A549 (cell line): ENCODE measurements at regions of chr14 and their contacts with region 1.

Region 1: DNA sequence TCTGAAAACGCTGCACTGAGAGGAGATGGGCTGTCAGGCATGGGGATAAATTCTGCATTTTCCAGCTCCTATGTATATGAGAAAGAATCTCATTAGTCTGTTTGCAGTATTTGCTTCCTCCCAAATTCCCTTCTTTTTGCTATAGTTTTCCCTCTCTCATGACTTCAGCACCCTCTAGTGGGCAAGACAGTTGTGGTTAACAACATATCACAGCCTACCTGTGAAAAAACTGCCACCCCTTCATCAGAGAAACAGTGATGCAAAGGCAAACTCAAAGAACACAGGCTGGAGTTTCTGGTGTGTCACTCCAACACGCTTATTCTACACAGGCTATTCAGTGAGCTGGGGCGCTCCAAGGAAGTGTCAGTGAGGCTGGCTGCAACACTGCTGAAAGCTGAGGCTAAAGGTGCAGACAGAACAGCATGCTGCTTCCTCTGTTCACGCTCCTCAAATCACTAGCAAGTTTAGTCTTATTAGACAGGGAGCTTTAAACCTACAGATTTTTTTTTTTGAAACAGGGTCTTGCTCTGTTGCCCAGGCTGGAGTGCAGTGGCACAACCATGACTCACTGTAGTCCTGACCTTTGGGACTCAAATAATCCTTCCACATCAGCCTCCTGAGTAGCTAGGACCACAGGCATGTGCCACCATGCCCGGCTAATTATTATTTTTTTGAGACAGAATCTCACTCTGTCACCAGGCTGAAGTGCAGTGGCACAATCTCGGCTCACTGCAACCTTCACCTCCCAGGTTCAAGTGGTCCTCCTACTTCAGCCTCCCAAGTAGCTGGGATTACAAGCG is 19.3 kb downstream of the ZC2HC1C start:
- DNase-seq: peak; percentile 43 to 63
- ATAC-seq: peak; percentile 90 to 94
- H3K4me3 ChIP-seq: no peak overlapping the region
- H3K27ac ChIP-seq: no peak overlapping the region
- H3K4me1 ChIP-seq: no peaks in the 10 kb centered on the region
- CTCF ChIP-seq: peak; percentile 86
- EP300 ChIP-seq: no peak
- POLR2A ChIP-seq: no peak
- RAD21 ChIP-seq: peak; percentile 84 to 93

Region 2: GRCh38 chr14:74860906-74861733 is 227.7 kb before region 1 on chr14:
- CTCF ChIA-PET with region 1: interaction called, 148 read pairs
- POLR2A ChIA-PET with region 1: no interaction called
- DNase-seq: peak; percentile 74 to 82
- ATAC-seq: peak; percentile 81 to 92
- H3K4me3 ChIP-seq: no peak overlapping the region
- H3K27ac ChIP-seq: no peak overlapping the region
- H3K4me1 ChIP-seq: no peaks in the 10 kb centered on the region
- CTCF ChIP-seq: peak; percentile 87
- EP300 ChIP-seq: no peak
- POLR2A ChIP-seq: no peak
- RAD21 ChIP-seq: peak; percentile 82 to 91

Region 3: GRCh38 chr14:74905375-74906142 is 183.2 kb before region 1 on chr14:
- CTCF ChIA-PET with region 1: interaction called, 87 read pairs
- POLR2A ChIA-PET with region 1: no interaction called
- DNase-seq: peak; percentile 51 to 60
- ATAC-seq: peak; percentile 33 to 74; a peak in 3 of 6 replicates
- H3K4me3 ChIP-seq: no peak overlapping the region
- H3K27ac ChIP-seq: peak overlapping the region in 1 of 2 experiments; percentile 44; a peak in 1 of 6 replicates
- H3K4me1 ChIP-seq: no peaks in the 10 kb centered on the region; the same call in 2 of the 3 replicates
- CTCF ChIP-seq: peak; percentile 85
- EP300 ChIP-seq: no peak
- POLR2A ChIP-seq: no peak
- RAD21 ChIP-seq: peak; percentile 57 to 60; a peak in 4 of 5 replicates

Region 4: GRCh38 chr14:74932401-74932901 is 156.3 kb before region 1 on chr14:
- CTCF ChIA-PET with region 1: interaction called, 14 read pairs
- POLR2A ChIA-PET with region 1: no interaction called
- DNase-seq: no peak
- ATAC-seq: peak in 1 of 2 experiments; percentile 51; a peak in 3 of 6 replicates
- H3K4me3 ChIP-seq: no peak overlapping the region
- H3K27ac ChIP-seq: peak overlapping the region in 1 of 2 experiments; percentile 31; a peak in 1 of 6 replicates
- H3K4me1 ChIP-seq: peaks cover 3% of the 10 kb centered on the region; the same call in 1 of the 3 replicates
- CTCF ChIP-seq: no peak
- EP300 ChIP-seq: no peak
- POLR2A ChIP-seq: no peak
- RAD21 ChIP-seq: no peak

Region 5: GRCh38 chr14:74963705-74964271 is 125.0 kb before region 1 on chr14:
- CTCF ChIA-PET with region 1: interaction called, 24 read pairs
- POLR2A ChIA-PET with region 1: no interaction called
- DNase-seq: no peak
- ATAC-seq: peak; percentile 23 to 36; a peak in 3 of 6 replicates
- H3K4me3 ChIP-seq: no peak overlapping the region
- H3K27ac ChIP-seq: no peak overlapping the region
- H3K4me1 ChIP-seq: peaks cover 5% of the 10 kb centered on the region; the same call in 1 of the 3 replicates
- CTCF ChIP-seq: no peak
- EP300 ChIP-seq: no peak
- POLR2A ChIP-seq: no peak
- RAD21 ChIP-seq: no peak

Region 6: GRCh38 chr14:75050852-75051554 is 37.8 kb before region 1 on chr14 and contains the start of gene MLH3:
- CTCF ChIA-PET with region 1: interaction called, 10 read pairs
- POLR2A ChIA-PET with region 1: no interaction called
- DNase-seq: peak; percentile 93
- ATAC-seq: peak; percentile 93 to 94
- H3K4me3 ChIP-seq: peak within 1 kb of the TSS; percentile 53
- H3K27ac ChIP-seq: peak within 1 kb of the TSS; percentile 83 to 93
- H3K4me1 ChIP-seq: peaks cover 9% of the 10 kb centered on the region; the same call in 1 of the 3 replicates
- CTCF ChIP-seq: no peak
- EP300 ChIP-seq: no peak
- POLR2A ChIP-seq: peak; percentile 72
- RAD21 ChIP-seq: no peak; a peak in 1 of 5 replicates
- polyA plus RNA-seq, gene MLH3: 30.8 and 32.3 TPM in 2 replicates

Region 7: DNA sequence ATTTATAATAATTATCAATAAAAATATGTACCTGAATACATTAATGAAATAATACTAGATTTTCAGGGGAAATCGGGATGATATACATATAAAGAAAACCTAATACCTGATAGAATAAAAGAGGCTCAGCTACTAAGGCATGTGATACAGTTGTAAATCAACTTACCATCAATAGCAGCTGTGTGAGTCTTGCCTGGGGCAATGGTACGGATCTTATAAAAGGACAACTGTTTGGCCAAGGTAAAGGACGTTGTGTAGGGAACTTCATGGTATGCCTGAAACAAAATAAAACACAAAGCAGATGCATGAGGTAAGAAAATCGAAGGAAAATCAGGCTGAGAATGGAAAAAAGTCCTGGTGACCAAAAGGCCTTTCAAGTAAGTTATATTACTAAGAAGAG is 12.7 kb after region 1 on chr14:
- CTCF ChIA-PET with region 1: interaction called, 29 read pairs
- POLR2A ChIA-PET with region 1: no interaction called
- DNase-seq: no peak
- ATAC-seq: no peak
- H3K4me3 ChIP-seq: no peak overlapping the region
- H3K27ac ChIP-seq: no peak overlapping the region
- H3K4me1 ChIP-seq: no peaks in the 10 kb centered on the region
- CTCF ChIP-seq: no peak
- EP300 ChIP-seq: no peak
- POLR2A ChIP-seq: no peak
- RAD21 ChIP-seq: no peak